GM10248 (cell line): ENCODE measurements at regions of chr11 and their contacts with region 1.

Region 1: GRCh38 chr11:60251485-60252212 is 8.7 kb upstream of the MS4A4E start:
- DNase-seq: no peak
- CTCF ChIP-seq: peak; percentile 33

Region 2: DNA sequence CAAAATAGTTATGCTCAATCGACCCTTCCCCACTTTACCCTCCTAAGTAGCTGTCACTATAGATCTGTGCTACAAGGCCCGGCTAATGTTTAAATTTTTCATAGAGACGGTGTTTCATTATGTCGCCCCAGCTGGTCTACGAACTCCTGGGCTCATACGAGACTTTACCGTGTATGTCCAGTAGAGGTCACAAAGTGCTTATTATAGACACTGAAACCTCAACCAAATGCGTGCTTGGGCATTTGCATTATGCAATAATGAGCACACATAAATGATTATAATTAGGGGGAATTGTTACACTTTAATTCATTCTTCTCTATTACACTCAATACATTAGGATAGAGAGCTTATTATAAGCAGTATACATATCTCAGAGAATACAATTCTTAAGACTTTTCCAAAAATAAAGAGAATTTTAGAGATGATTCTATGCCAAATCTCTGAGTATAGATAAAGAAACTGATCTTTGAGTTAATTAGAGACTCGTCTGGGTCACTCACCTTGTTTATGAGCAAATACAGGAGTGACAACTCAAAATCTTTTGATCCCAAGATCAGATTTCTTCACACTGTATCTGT is 428.6 kb before region 1 on chr11:
- CTCF ChIA-PET with region 1: interaction called, 18 read pairs
- POLR2A ChIA-PET with region 1: no interaction called
- DNase-seq: peak; percentile 49
- CTCF ChIP-seq: peak; percentile 63

Region 3: GRCh38 chr11:60184824-60185511 is 66.7 kb before region 1 on chr11:
- CTCF ChIA-PET with region 1: interaction called, 12 read pairs
- POLR2A ChIA-PET with region 1: no interaction called
- DNase-seq: no peak
- CTCF ChIP-seq: no peak

Region 4: DNA sequence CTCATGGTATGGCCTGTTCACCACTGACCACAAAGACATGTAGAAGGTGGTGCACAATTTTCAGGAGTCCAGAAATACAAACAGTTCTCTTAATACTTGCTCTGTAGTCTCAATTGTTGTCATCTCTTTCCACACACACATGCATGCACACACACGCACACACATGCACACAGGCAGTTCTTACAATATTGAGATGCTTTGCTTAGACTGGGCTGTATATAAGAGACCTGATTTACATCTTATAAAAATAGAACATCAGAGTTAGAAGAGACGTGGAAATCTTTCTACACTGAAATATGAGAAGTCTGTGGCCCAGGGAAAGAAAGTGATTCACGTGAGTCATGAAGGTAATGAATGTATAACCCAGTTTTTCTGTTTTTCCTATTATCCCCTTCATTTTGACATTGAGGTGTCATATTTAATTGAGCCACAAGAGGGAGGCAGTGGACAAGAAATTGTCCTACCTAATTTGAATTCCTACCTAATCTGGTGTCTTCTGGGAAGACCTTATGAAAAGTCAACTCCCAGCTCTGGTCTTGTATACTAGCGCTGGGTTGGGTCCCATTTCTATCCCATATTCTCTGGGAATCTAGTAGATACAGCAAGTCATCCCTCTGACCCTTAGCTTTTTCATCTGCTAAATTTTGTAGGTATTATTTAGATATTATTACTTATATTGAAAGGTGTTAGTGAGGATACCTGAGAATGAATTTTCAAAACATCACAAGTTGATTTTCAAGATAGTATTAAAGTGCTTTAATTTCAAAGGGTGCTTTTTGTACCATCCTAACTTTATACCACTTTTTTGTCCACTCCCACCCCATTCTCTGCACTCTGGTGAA is 13.9 kb after region 1 on chr11:
- CTCF ChIA-PET with region 1: interaction called, 42 read pairs
- POLR2A ChIA-PET with region 1: no interaction called
- DNase-seq: peak; percentile 31
- CTCF ChIP-seq: peak; percentile 70